Naive thymus-derived CD4-positive, alpha-beta T cell (primary cell): ENCODE measurements at regions of chr4 and their contacts with region 1.

Region 1: GRCh38 chr4:113355550-113356371 is 306.3 kb downstream of the ANK2 start:
- DNase-seq: peak in 8 of 9 donors; percentile 0 to 64 (median 17)
- ATAC-seq: peak; percentile 91
- H3K4me3 ChIP-seq: peak overlapping the region; percentile 34
- H3K4me3 Mint-ChIP-seq: peak overlapping the region; percentile 58 to 82 (median 71)
- H3K27ac ChIP-seq: no peak overlapping the region
- H3K27ac Mint-ChIP-seq: peak overlapping the region in 6 of 9 donors; percentile 14 to 90 (median 66)
- H3K4me1 ChIP-seq: peaks cover 7 to 13% of the 10 kb centered on the region in 2 donors
- H3K4me1 Mint-ChIP-seq: peaks cover 10 to 36% (median 20%) of the 10 kb centered on the region in 7 donors
- H3K27me3 ChIP-seq: no peaks in the 10 kb centered on the region
- H3K27me3 Mint-ChIP-seq: peaks cover 6 to 55% (median 18%) of the 10 kb centered on the region in 5 donors

Region 2: DNA sequence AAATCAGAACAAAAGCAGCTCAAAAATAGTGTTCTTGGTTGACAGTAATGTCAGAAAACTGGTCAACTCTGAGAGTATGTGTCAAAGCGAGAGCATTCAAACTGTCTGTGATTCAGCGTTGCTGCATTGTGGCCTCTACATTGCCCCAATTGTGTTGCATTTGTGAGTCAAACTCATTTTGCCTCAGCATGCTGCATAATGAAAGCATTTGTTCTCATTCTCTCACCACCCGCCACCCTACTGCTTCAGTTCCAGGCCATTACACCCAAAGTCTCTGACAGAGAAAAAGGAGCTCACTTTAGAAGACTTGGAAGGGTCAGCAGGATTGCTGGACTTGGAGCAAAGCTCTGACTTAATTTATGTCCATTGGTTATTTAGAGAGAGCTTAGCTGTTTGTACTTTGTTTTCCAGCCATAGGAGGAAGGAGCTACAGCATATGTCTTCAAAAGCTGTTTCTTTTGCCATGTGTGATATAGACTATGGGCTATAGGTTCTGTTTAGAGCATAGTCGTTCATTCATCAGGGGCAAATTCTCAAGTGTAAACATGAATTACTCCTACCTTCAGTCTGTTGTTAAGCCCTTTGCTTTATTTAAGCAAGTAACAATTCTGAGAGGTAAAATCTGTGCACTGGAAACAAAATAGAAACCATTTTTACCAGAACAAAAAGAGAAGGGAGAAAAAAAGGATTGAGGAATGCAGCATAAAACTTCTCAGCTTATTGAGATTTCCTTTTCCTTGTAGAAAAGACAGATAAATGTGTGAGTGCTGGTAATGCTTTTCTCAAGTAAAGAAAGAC is 459.8 kb before region 1 on chr4:
- CTCF ChIA-PET with region 1: no interaction called
- POLR2A ChIA-PET with region 1: no interaction called
- intact Hi-C with region 1: no loop called
- DNase-seq: no peak
- ATAC-seq: no peak
- H3K4me3 ChIP-seq: no peak overlapping the region
- H3K4me3 Mint-ChIP-seq: no peak overlapping the region
- H3K27ac ChIP-seq: no peak overlapping the region
- H3K27ac Mint-ChIP-seq: no peak overlapping the region
- H3K4me1 ChIP-seq: no peaks in the 10 kb centered on the region
- H3K4me1 Mint-ChIP-seq: no peaks in the 10 kb centered on the region
- H3K27me3 ChIP-seq: no peaks in the 10 kb centered on the region
- H3K27me3 Mint-ChIP-seq: peaks cover 0 to 39% (median 20%) of the 10 kb centered on the region in 5 donors

Region 3: DNA sequence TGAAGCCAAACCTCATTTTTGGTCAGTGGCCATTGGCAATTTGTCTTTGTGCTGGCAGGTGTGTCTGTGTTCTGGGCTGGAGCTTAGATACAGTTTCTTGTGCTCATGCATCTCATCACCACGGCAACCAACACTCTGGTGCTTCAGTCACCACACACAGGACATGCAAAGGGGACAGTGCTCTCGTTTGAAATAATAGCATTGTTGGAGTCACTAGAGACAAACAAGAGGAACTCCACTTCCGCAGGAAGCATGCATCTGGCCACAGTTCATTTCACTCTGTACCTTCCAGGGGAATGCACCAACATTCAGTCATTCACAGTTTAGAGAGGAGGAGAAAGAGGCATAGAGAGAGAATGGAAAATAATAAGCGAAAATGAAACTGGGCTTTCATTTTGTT is 38.9 kb before region 1 on chr4:
- CTCF ChIA-PET with region 1: no interaction called
- POLR2A ChIA-PET with region 1: no interaction called
- intact Hi-C with region 1: loop called in 1 of 2 experiments (anchors 1 kb)
- DNase-seq: peak in 4 of 9 donors; percentile 1 to 15 (median 10)
- ATAC-seq: peak; percentile 40
- H3K4me3 ChIP-seq: no peak overlapping the region
- H3K4me3 Mint-ChIP-seq: peak overlapping the region in 3 of 10 donors; percentile 8 to 10 (median 9)
- H3K27ac ChIP-seq: no peak overlapping the region
- H3K27ac Mint-ChIP-seq: peak overlapping the region in 2 of 9 donors; percentile 9 to 77
- H3K4me1 ChIP-seq: no peaks in the 10 kb centered on the region
- H3K4me1 Mint-ChIP-seq: peaks cover 3 to 13% (median 11%) of the 10 kb centered on the region in 7 donors
- H3K27me3 ChIP-seq: no peaks in the 10 kb centered on the region
- H3K27me3 Mint-ChIP-seq: peaks cover 2 to 12% (median 5%) of the 10 kb centered on the region in 5 donors

Region 4: DNA sequence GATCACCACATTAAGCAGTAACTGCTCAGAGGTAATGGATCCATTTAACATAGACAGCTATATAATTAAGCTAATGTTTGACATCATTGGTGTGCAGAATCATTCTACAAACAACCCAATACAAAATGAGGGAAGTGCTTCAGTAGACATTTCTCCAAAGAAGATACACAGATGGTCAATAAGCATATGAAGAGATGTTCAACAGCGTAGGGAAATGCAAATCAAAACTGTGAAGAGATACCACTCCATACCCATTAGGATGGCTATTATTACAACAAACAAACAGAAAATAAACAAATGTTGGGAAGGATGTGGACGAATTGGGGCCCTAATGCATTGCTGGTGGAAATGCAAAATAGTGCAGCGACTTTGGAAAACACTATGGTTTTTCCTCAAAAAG is 11.7 kb before region 1 on chr4:
- CTCF ChIA-PET with region 1: no interaction called
- POLR2A ChIA-PET with region 1: no interaction called
- intact Hi-C with region 1: no loop called
- DNase-seq: no peak
- ATAC-seq: no peak
- H3K4me3 ChIP-seq: no peak overlapping the region
- H3K4me3 Mint-ChIP-seq: no peak overlapping the region
- H3K27ac ChIP-seq: no peak overlapping the region
- H3K27ac Mint-ChIP-seq: no peak overlapping the region
- H3K4me1 ChIP-seq: no peaks in the 10 kb centered on the region
- H3K4me1 Mint-ChIP-seq: peaks cover 0 to 1% (median 0%) of the 10 kb centered on the region in 7 donors
- H3K27me3 ChIP-seq: no peaks in the 10 kb centered on the region
- H3K27me3 Mint-ChIP-seq: peaks cover 9 to 26% (median 17%) of the 10 kb centered on the region in 5 donors

Region 5: DNA sequence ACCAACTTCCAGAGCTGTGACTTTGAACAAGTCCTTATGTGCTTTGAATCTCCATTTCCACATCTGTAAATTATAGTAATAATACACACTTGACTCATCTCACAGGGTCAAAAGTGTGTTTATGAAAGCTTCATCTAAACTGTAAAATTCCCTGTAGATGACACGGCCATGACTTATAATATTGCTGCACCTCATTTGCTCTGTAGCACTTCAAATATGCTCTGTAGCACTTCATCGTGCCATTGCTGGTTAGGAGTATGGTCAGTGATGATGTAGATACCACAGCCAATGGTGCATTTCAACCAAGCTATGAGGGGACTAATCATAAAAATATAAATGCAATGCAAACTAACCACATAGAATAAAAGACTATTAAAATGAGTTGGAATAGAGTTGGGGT is 12.3 kb after region 1 on chr4:
- CTCF ChIA-PET with region 1: no interaction called
- POLR2A ChIA-PET with region 1: no interaction called
- intact Hi-C with region 1: no loop called
- DNase-seq: no peak
- ATAC-seq: no peak
- H3K4me3 ChIP-seq: no peak overlapping the region
- H3K4me3 Mint-ChIP-seq: no peak overlapping the region
- H3K27ac ChIP-seq: no peak overlapping the region
- H3K27ac Mint-ChIP-seq: no peak overlapping the region
- H3K4me1 ChIP-seq: no peaks in the 10 kb centered on the region
- H3K4me1 Mint-ChIP-seq: no peaks in the 10 kb centered on the region
- H3K27me3 ChIP-seq: no peaks in the 10 kb centered on the region
- H3K27me3 Mint-ChIP-seq: peaks cover 0 to 9% (median 0%) of the 10 kb centered on the region in 5 donors

Region 6: GRCh38 chr4:113445286-113445685 is 89.5 kb after region 1 on chr4:
- CTCF ChIA-PET with region 1: no interaction called
- POLR2A ChIA-PET with region 1: no interaction called
- intact Hi-C with region 1: no loop called
- DNase-seq: no peak
- ATAC-seq: no peak
- H3K4me3 ChIP-seq: no peak overlapping the region
- H3K4me3 Mint-ChIP-seq: no peak overlapping the region
- H3K27ac ChIP-seq: no peak overlapping the region
- H3K27ac Mint-ChIP-seq: no peak overlapping the region
- H3K4me1 ChIP-seq: no peaks in the 10 kb centered on the region
- H3K4me1 Mint-ChIP-seq: peaks cover 0 to 6% (median 4%) of the 10 kb centered on the region in 7 donors
- H3K27me3 ChIP-seq: no peaks in the 10 kb centered on the region
- H3K27me3 Mint-ChIP-seq: peaks cover 0 to 7% (median 0%) of the 10 kb centered on the region in 5 donors